ENCODE measurements at regions of chr16 and their contacts with region 1.

Region 1: GRCh38 chr16:88633684-88634140 is 4.7 kb upstream of the IL17C start:
- DNase-seq: peak in 1 of 2 donors; percentile 82
- ATAC-seq: peak; percentile 40 to 57 (median 54)
- H3K4me3 ChIP-seq: peak overlapping the region; percentile 71
- H3K4me3 Mint-ChIP-seq: peak overlapping the region; percentile 82
- H3K27ac ChIP-seq: peak overlapping the region; percentile 88
- H3K27ac Mint-ChIP-seq: peak overlapping the region; percentile 88 to 90
- H3K4me1 ChIP-seq: peaks cover 56% of the 10 kb centered on the region
- H3K4me1 Mint-ChIP-seq: peaks cover 19 to 42% of the 10 kb centered on the region in 2 donors
- H3K27me3 ChIP-seq: no peaks in the 10 kb centered on the region
- H3K27me3 Mint-ChIP-seq: peaks cover 0 to 3% of the 10 kb centered on the region in 2 donors
- CTCF ChIP-seq: no peak

Region 2: DNA sequence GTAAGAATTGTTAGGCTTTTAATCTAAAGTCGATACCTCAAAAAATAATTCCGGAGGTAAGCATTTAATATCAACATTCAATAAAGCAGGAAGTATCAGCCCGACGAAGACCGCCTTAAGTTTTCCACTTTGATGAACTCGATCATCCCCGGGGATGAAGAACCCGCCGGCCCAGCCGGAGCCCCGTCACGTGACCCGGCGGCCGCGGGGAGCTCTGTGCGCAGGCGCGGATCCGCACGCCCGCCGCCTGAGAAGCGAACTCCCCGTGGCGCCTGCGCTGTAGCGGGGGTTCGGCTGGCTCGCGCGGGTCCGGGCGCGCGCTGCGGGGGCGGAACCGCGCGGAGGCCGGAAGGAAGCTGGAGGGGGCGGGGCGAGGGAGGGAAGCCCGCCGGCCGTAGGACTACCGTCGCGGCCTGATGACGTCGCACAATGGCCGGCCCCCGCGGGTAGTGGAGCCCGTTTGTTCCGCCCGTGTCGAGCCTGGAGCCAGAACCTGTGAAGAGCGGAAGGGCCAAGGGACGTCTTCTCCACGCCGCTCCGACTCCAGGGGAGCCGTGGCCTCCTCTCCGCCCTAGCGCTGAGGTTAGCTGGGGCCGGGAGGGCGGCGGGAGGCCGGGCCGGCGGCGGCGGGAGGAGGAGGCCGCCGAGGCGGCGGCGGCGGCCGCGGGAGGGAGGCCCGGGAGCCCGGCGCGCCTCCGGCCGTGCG is 63.6 kb before region 1 on chr16 and contains the start of gene ZC3H18:
- intact Hi-C with region 1: loop called (anchors 10 kb)
- DNase-seq: peak; percentile 98 to 100
- ATAC-seq: peak; percentile 93 to 98 (median 94)
- H3K4me3 ChIP-seq: peak within 1 kb of the TSS; percentile 70
- H3K4me3 Mint-ChIP-seq: peak within 1 kb of the TSS; percentile 86
- H3K27ac ChIP-seq: peak within 1 kb of the TSS; percentile 77
- H3K27ac Mint-ChIP-seq: peak within 1 kb of the TSS; percentile 84 to 87
- H3K4me1 ChIP-seq: peaks cover 18% of the 10 kb centered on the region
- H3K4me1 Mint-ChIP-seq: peaks cover 25 to 36% of the 10 kb centered on the region in 2 donors
- H3K27me3 ChIP-seq: no peaks in the 10 kb centered on the region
- H3K27me3 Mint-ChIP-seq: no peaks in the 10 kb centered on the region
- CTCF ChIP-seq: no peak
- total RNA-seq, gene ZC3H18: 125 to 130 (median 126) TPM

Measured in natural killer cell (primary cell).